ENCODE measurements at regions of chr17 and their contacts with region 1.

Region 1: DNA sequence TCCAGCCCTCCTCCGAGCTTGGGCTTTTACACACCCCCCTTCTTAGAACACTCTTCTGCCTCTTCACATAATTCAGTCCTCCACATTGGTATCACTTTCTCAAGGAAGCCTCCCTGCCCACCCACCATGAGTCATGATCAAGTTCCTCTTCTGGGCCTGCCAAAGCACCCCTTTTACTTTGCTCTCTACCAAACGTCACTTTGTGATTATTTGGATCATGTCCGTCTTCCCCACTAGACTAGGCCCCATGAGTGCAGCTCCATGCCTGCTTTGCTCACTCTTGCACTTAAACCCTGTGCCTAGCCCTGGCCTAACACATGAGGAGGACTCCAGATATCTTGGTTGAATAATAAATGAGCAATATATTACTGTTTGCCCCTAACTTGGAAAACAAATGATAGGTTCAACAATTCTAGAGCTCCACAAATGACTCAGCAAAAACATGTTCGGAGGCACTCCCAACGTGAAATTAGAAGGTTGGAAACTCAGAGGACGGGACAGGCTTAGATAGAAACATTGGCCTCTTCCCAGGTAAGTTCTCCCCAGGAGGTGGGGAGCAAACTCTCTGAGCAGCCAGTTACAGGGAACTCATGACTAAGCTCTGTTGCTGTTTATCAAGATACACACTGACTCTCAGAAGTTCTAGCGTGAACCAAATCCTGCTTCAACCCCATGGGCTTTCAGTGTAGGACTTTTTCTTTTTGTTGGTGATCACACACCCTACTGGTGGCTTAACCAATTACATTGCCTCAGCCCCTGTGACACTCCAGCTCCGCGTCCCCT is 28.3 kb downstream of the G6PC1 start:
- DNase-seq: peak; percentile 34
- H3K4me3 ChIP-seq: no peak overlapping the region
- H3K27ac ChIP-seq: peak overlapping the region; percentile 47 to 69
- H3K4me1 ChIP-seq: peaks cover 8% of the 10 kb centered on the region
- H3K27me3 ChIP-seq: no peaks in the 10 kb centered on the region
- CTCF ChIP-seq: peak; percentile 65 to 77 (median 72)
- POLR2A ChIP-seq: no peak

Region 2: DNA sequence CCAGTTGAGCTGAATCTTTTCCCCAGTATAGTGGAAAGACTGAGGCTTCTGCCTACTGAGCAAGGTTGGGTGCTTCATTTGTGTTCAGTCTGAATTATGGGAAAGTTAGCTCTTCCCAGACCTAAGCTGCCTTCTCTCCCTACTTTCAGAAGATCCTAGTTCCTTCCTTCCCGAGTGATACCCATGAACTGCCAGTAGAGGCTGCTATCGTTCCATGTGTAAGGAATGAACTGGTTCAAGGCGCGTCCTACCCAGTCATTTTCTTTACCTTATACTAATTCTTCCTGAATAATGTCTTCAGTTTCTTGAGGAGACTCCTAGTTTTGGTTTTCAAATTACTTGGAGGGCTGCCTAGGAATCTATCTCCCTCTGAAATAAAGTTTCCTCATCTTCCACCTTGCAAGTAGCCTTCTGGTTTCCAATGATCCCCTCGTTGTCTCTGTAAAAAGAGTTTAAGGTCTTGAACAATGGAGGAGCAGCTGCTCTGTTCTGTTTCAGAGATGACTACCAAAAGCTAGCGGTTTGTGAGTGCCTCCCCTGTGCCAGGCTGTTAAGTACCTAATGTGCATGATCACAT is 85.5 kb before region 1 on chr17:
- intact Hi-C with region 1: loop called (anchors 5 kb)
- DNase-seq: peak; percentile 40
- H3K4me3 ChIP-seq: no peak overlapping the region
- H3K27ac ChIP-seq: no peak overlapping the region
- H3K4me1 ChIP-seq: no peaks in the 10 kb centered on the region
- H3K27me3 ChIP-seq: no peaks in the 10 kb centered on the region
- CTCF ChIP-seq: peak; percentile 83 to 89 (median 84)
- POLR2A ChIP-seq: no peak